ENCODE measurements at regions of chr11 and their contacts with region 1.

Region 1: GRCh38 chr11:64894070-64894796 is 15.8 kb upstream of the EHD1 start:
- DNase-seq: peak; percentile 39
- H3K4me3 ChIP-seq: no peak overlapping the region
- H3K27ac ChIP-seq: no peak overlapping the region
- H3K4me1 ChIP-seq: no peaks in the 10 kb centered on the region
- H3K27me3 ChIP-seq: no peaks in the 10 kb centered on the region
- CTCF ChIP-seq: peak; percentile 79 to 92

Region 2: GRCh38 chr11:64787526-64788320 is 106.5 kb before region 1 on chr11:
- CTCF ChIA-PET with region 1: no interaction called
- dilution Hi-C with region 1: loop called (anchors 5 kb)
- in situ Hi-C with region 1: loop called in 1 of 2 experiments (anchors 10 kb)
- intact Hi-C with region 1: loop called (anchors 1 kb)
- DNase-seq: peak; percentile 25
- H3K4me3 ChIP-seq: no peak overlapping the region
- H3K27ac ChIP-seq: no peak overlapping the region
- H3K4me1 ChIP-seq: no peaks in the 10 kb centered on the region
- H3K27me3 ChIP-seq: no peaks in the 10 kb centered on the region
- CTCF ChIP-seq: peak; percentile 81 to 92

Region 3: GRCh38 chr11:64793271-64794172 is 100.7 kb before region 1 on chr11:
- CTCF ChIA-PET with region 1: no interaction called
- dilution Hi-C with region 1: loop called (anchors 5 kb)
- in situ Hi-C with region 1: loop called in 1 of 2 experiments (anchors 10 kb)
- intact Hi-C with region 1: no loop called
- DNase-seq: no peak
- H3K4me3 ChIP-seq: no peak overlapping the region
- H3K27ac ChIP-seq: no peak overlapping the region
- H3K4me1 ChIP-seq: no peaks in the 10 kb centered on the region
- H3K27me3 ChIP-seq: no peaks in the 10 kb centered on the region
- CTCF ChIP-seq: no peak

Region 4: DNA sequence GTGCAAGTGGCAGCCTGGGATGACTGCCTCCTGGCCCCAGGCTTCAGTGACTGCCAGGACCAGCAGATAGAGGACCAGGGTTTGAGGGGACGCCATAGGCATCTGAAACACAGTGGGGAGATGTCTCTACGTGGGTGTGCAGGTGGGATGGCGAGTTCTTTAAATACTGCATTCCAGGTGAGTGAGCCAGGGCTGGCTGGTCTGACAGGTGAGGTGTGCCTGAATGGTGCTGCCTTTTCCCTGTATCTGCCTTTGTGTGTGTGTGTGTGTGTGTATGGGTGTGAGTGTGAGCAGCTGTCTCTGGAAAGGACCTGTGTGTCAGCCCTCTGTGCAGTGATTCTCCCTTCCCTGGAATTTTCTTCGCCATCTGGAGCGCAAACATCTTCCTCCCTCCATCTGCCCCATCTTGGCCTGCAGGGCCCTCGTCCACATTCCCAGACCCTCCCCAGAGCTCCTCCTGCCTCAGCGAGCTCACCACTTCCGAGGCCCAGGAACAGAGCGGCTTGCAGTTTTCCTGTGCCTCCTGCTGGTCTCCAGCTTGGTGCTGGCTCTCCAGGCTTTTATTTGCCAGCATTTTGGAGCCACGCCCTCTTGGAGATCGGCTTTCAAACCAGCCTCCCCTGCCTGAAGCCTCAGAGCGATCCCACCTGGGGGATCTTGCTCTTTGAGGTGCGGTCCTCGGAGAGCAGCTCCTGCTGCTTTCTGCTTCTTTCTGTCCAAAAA is 41.3 kb after region 1 on chr11 and contains the start of gene GPHA2:
- CTCF ChIA-PET with region 1: no interaction called
- dilution Hi-C with region 1: loop called (anchors 5 kb)
- in situ Hi-C with region 1: no loop called
- intact Hi-C with region 1: no loop called
- DNase-seq: no peak
- H3K4me3 ChIP-seq: no peak within 1 kb of the TSS
- H3K27ac ChIP-seq: no peak within 1 kb of the TSS
- H3K4me1 ChIP-seq: no peaks in the 10 kb centered on the region
- H3K27me3 ChIP-seq: no peaks in the 10 kb centered on the region
- CTCF ChIP-seq: no peak
- total RNA-seq, gene GPHA2: not detected

Region 5: GRCh38 chr11:64976651-64977050 is 82.4 kb after region 1 on chr11:
- CTCF ChIA-PET with region 1: no interaction called
- dilution Hi-C with region 1: no loop called
- in situ Hi-C with region 1: no loop called
- intact Hi-C with region 1: no loop called
- DNase-seq: no peak
- H3K4me3 ChIP-seq: no peak overlapping the region
- H3K27ac ChIP-seq: no peak overlapping the region
- H3K4me1 ChIP-seq: no peaks in the 10 kb centered on the region
- H3K27me3 ChIP-seq: no peaks in the 10 kb centered on the region
- CTCF ChIP-seq: no peak

Measured in mammary epithelial cell (primary cell).